ENCODE measurements at regions of chr5 and their contacts with region 1.

Region 1: DNA sequence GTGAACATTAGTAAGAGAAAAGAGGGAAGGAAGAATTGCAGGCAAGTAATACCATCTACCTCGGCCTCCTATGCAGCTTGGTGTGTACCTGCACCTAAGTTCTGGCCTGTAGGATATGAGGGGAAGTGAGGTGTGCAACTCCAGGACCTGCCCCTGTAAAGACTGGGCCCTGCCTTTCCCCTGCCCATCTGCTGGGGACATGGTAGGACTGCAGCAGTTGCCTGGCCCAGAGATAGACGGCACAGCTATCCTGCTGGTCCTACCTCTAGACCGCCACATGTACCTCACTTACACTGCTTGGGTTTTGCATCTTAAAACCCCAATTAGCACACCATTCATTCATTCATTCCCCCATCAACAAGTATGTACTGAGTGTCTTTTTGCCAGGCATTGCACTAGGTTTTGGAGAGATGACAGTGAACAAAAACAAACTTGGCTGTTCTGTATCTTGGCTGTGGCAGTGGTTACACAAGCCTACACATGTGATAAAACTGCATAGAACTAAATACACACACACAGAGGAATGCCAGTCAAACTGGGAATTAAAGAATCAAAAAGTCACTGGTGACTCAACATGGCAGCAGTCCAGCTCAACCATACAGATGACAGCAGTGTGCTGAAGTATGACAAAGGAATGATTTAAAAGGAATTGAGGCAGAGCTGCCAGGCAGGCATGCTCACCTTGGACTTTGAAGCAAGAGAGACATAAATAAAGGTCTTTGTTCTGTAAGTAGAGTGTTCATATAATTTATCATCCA is 23.3 kb upstream of the MGAT1 start:
- DNase-seq: peak; percentile 93
- H3K4me3 Mint-ChIP-seq: no peak overlapping the region
- H3K27ac Mint-ChIP-seq: peak overlapping the region; percentile 5
- H3K4me1 Mint-ChIP-seq: peaks cover 28% of the 10 kb centered on the region
- H3K27me3 Mint-ChIP-seq: no peaks in the 10 kb centered on the region
- CTCF ChIP-seq: no peak

Region 2: GRCh38 chr5:180802325-180803180 is 23.4 kb before region 1 on chr5 and contains the start of gene MGAT1:
- CTCF ChIA-PET with region 1: interaction called, 6 read pairs
- POLR2A ChIA-PET with region 1: interaction called, 77 read pairs
- intact Hi-C with region 1: loop called (anchors 1 kb)
- DNase-seq: peak; percentile 93
- H3K4me3 Mint-ChIP-seq: peak within 1 kb of the TSS; percentile 75
- H3K27ac Mint-ChIP-seq: peak within 1 kb of the TSS; percentile 78
- H3K4me1 Mint-ChIP-seq: peaks cover 61% of the 10 kb centered on the region
- H3K27me3 Mint-ChIP-seq: no peaks in the 10 kb centered on the region
- CTCF ChIP-seq: no peak
- total RNA-seq, gene MGAT1: 135 and 150 TPM in 2 replicates

Region 3: GRCh38 chr5:180810210-180810958 is 15.6 kb before region 1 on chr5:
- CTCF ChIA-PET with region 1: interaction called, 12 read pairs
- POLR2A ChIA-PET with region 1: interaction called, 77 read pairs
- intact Hi-C with region 1: no loop called
- DNase-seq: peak; percentile 98
- H3K4me3 Mint-ChIP-seq: peak overlapping the region; percentile 80
- H3K27ac Mint-ChIP-seq: peak overlapping the region; percentile 75
- H3K4me1 Mint-ChIP-seq: peaks cover 53% of the 10 kb centered on the region
- H3K27me3 Mint-ChIP-seq: no peaks in the 10 kb centered on the region
- CTCF ChIP-seq: no peak

Region 4: GRCh38 chr5:180839925-180840324 is 14.0 kb after region 1 on chr5:
- CTCF ChIA-PET with region 1: interaction called, 3 read pairs
- POLR2A ChIA-PET with region 1: interaction called, 32 read pairs
- intact Hi-C with region 1: no loop called
- DNase-seq: no peak
- H3K4me3 Mint-ChIP-seq: no peak overlapping the region
- H3K27ac Mint-ChIP-seq: no peak overlapping the region
- H3K4me1 Mint-ChIP-seq: no peaks in the 10 kb centered on the region
- H3K27me3 Mint-ChIP-seq: no peaks in the 10 kb centered on the region
- CTCF ChIP-seq: no peak

Measured in MCF 10A (cell line).